ENCODE measurements at regions of chr17 and their contacts with region 1.

Region 1: DNA sequence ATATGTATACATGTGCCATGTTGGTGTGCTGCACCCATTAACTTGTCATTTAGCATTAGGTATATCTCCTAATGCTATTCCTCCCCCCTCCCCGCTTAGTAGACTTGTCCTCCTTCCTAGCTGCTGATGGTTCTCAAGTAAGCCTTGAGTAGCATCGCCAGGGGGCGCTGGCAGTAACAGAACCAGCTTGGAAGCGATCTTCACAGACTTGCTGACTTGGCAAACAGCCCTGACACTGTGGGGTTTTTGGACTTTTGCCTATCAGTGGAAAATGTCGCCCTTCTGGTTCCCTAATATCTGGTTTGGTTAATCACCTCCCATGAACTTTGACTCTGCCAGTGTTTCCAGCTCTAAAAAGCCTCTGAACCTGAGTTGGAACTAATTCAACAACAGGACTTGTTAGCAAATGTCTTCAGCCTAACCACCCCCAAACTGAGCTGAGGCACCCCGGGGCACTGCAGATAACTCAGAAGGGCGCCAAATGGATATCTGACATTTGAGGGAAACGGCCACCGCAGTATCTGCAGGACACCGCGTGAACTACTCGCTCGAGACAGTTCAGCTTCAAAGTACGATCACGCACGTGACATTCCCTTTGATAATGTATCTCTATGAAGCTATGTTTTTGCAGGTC is 15.4 kb upstream of the SPATA32 start:
- DNase-seq: peak; percentile 66
- ATAC-seq: peak; percentile 99
- H3K4me3 ChIP-seq: no peak overlapping the region
- H3K27ac ChIP-seq: 0 out of 2 replicates have a peak overlapping the region, but pooled peaks have one; percentile 22
- H3K4me1 ChIP-seq: peaks cover 4% of the 10 kb centered on the region; the same call in 1 of the 2 replicates
- H3K27me3 ChIP-seq: no peaks in the 10 kb centered on the region
- CTCF ChIP-seq: peak; percentile 73 to 85 (median 81)
- EP300 ChIP-seq: no peak
- POLR2A ChIP-seq: no peak
- RAD21 ChIP-seq: peak; percentile 94

Region 2: GRCh38 chr17:45060797-45061605 is 216.3 kb before region 1 on chr17 and contains the start of gene NMT1:
- CTCF ChIA-PET with region 1: no interaction called
- POLR2A ChIA-PET with region 1: no interaction called
- RAD21 ChIA-PET with region 1: no interaction called
- SMC1A ChIA-PET with region 1: no interaction called
- in situ Hi-C with region 1: no loop called
- intact Hi-C with region 1: no loop called
- DNase-seq: peak; percentile 99
- ATAC-seq: peak; percentile 90
- H3K4me3 ChIP-seq: peak within 1 kb of the TSS; percentile 84
- H3K27ac ChIP-seq: peak within 1 kb of the TSS; percentile 98
- H3K4me1 ChIP-seq: peaks cover 10% of the 10 kb centered on the region
- H3K27me3 ChIP-seq: no peaks in the 10 kb centered on the region
- CTCF ChIP-seq: no peak
- EP300 ChIP-seq: no peak
- POLR2A ChIP-seq: peak; percentile 98
- RAD21 ChIP-seq: no peak
- polyA plus RNA-seq, gene NMT1: 282 to 342 TPM

Region 3: GRCh38 chr17:45235416-45236281 is 41.7 kb before region 1 on chr17:
- CTCF ChIA-PET with region 1: interaction called, 10 read pairs
- POLR2A ChIA-PET with region 1: no interaction called
- RAD21 ChIA-PET with region 1: interaction called, 8 read pairs
- SMC1A ChIA-PET with region 1: interaction called, 14 read pairs
- in situ Hi-C with region 1: no loop called
- intact Hi-C with region 1: no loop called
- DNase-seq: no peak
- ATAC-seq: peak; percentile 85
- H3K4me3 ChIP-seq: no peak overlapping the region
- H3K27ac ChIP-seq: no peak overlapping the region
- H3K4me1 ChIP-seq: peaks cover 2% of the 10 kb centered on the region
- H3K27me3 ChIP-seq: no peaks in the 10 kb centered on the region
- CTCF ChIP-seq: peak; percentile 78 to 84 (median 82)
- EP300 ChIP-seq: no peak
- POLR2A ChIP-seq: no peak
- RAD21 ChIP-seq: peak; percentile 69

Region 4: DNA sequence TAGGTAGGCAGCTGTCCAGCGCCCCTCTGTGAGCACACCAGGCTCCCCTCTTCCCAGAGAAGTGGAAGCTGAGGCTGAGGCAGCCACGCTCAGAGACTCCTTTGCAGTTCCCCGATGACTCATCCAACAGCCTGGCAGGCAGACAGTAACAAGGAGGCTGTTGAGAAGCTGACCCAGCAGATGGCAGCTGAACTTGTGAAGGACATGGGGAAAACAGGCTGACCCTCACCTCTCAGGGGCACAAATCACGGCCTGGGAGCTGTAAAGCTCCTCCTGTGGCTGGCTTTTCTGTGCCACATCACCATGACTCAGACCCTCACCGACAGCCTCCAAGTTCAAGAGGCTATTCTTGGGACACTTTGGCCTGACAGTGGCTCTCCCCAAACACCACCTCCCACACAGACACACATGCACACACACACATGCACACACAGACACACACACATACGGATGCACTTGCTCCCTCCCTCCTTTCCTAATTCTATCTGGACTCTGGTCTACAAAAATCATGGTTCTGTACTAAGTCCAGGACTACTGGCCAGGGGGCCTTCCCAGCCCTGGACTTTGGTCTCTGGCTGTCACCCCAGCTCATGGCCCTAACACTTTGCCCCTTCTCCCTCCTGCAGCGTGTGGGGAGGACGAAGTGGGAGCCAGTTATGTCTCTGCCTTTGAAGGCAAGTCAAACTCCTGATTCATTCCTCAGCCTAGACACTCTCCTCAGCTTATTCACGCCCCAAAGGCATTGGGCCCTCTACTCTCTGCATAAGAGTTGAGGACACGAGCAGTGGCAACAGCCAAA is 16.3 kb after region 1 on chr17:
- CTCF ChIA-PET with region 1: interaction called, 38 read pairs
- POLR2A ChIA-PET with region 1: interaction called, 12 read pairs
- RAD21 ChIA-PET with region 1: interaction called, 35 read pairs
- SMC1A ChIA-PET with region 1: interaction called, 58 read pairs
- in situ Hi-C with region 1: no loop called
- intact Hi-C with region 1: no loop called
- DNase-seq: no peak
- ATAC-seq: peak; percentile 63
- H3K4me3 ChIP-seq: no peak overlapping the region
- H3K27ac ChIP-seq: peak overlapping the region; percentile 42
- H3K4me1 ChIP-seq: peaks cover 76% of the 10 kb centered on the region
- H3K27me3 ChIP-seq: no peaks in the 10 kb centered on the region
- CTCF ChIP-seq: peak in 1 of 3 experiments; percentile 11; a peak in 1 of 6 replicates
- EP300 ChIP-seq: no peak
- POLR2A ChIP-seq: no peak
- RAD21 ChIP-seq: no peak

Region 5: GRCh38 chr17:45317112-45317928 is 40.0 kb after region 1 on chr17:
- CTCF ChIA-PET with region 1: interaction called, 194 read pairs
- POLR2A ChIA-PET with region 1: interaction called, 19 read pairs
- RAD21 ChIA-PET with region 1: interaction called, 65 read pairs
- SMC1A ChIA-PET with region 1: interaction called, 75 read pairs
- in situ Hi-C with region 1: no loop called
- intact Hi-C with region 1: loop called (anchors 1 kb)
- DNase-seq: peak; percentile 100
- ATAC-seq: peak; percentile 81
- H3K4me3 ChIP-seq: peak overlapping the region; percentile 92
- H3K27ac ChIP-seq: peak overlapping the region; percentile 91
- H3K4me1 ChIP-seq: peaks cover 39% of the 10 kb centered on the region
- H3K27me3 ChIP-seq: no peaks in the 10 kb centered on the region
- CTCF ChIP-seq: no peak
- EP300 ChIP-seq: no peak
- POLR2A ChIP-seq: peak; percentile 61
- RAD21 ChIP-seq: no peak

Region 6: DNA sequence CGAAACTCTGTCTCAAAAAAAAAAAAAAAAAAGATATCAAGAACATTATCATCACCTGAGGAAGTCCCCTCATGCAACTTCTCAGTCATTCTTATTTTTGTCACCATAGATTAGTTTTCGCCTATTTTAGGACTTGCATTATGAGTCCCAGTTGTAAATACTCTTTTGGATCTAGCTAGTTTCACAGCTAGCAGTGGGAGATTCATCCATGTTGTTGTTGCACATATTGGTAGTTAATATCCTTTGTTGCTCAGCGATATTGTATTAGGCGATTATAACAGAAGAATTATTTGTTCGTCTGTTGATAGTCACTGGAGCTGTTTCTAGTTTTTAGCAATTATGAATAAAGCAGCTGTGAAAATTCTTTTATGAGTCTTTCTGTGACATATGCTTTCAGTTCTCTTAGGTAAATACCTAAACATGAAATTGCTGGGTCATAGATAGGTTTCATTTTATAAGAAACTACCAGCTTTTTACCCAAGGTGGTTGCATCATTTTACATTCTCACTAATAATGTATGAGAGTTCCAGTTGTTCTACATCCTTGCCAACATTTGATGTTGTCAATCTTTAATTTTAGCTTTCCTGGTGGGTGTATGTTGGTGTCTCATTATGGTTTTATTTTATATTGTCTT is 80.1 kb after region 1 on chr17:
- CTCF ChIA-PET with region 1: interaction called, 6 read pairs
- POLR2A ChIA-PET with region 1: interaction called, 3 read pairs
- RAD21 ChIA-PET with region 1: interaction called, 5 read pairs
- SMC1A ChIA-PET with region 1: interaction called, 15 read pairs
- in situ Hi-C with region 1: no loop called
- intact Hi-C with region 1: no loop called
- DNase-seq: peak; percentile 63
- ATAC-seq: peak; percentile 80
- H3K4me3 ChIP-seq: no peak overlapping the region
- H3K27ac ChIP-seq: peak overlapping the region; percentile 91
- H3K4me1 ChIP-seq: peaks cover 23% of the 10 kb centered on the region
- H3K27me3 ChIP-seq: no peaks in the 10 kb centered on the region
- CTCF ChIP-seq: no peak
- EP300 ChIP-seq: peak; percentile 24 to 40; a peak in 1 of 4 replicates
- POLR2A ChIP-seq: no peak
- RAD21 ChIP-seq: peak; percentile 14; the same call in 1 of the 2 replicates

Region 7: DNA sequence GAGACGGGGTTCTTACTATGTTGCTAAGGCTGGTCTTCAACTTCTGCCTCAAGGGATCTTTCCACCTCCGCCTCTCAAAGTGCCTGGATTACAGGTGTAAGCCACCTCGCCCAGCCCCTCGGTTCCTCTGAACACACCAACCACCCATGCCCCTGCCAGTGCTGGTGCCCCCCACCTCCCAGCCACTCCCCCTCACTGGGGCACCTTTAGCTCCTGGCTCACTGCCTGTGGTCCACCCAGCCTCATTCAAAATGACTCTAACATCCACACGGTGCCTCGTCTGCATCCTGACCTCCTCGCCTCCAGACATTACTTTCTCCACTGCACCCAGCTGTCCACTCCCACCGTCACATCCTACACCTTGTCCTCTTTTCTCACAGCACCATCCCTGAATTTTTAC is 100.1 kb after region 1 on chr17:
- CTCF ChIA-PET with region 1: interaction called, 291 read pairs
- POLR2A ChIA-PET with region 1: interaction called, 6 read pairs
- RAD21 ChIA-PET with region 1: interaction called, 150 read pairs
- SMC1A ChIA-PET with region 1: interaction called, 184 read pairs
- in situ Hi-C with region 1: no loop called
- intact Hi-C with region 1: no loop called
- DNase-seq: no peak
- ATAC-seq: no peak
- H3K4me3 ChIP-seq: no peak overlapping the region
- H3K27ac ChIP-seq: no peak overlapping the region
- H3K4me1 ChIP-seq: peaks cover 36% of the 10 kb centered on the region
- H3K27me3 ChIP-seq: no peaks in the 10 kb centered on the region
- CTCF ChIP-seq: no peak
- EP300 ChIP-seq: no peak
- POLR2A ChIP-seq: no peak
- RAD21 ChIP-seq: no peak

Measured in GM12878 (cell line).